ENCODE measurements at regions of chr7 and their contacts with region 1.

Region 1: DNA sequence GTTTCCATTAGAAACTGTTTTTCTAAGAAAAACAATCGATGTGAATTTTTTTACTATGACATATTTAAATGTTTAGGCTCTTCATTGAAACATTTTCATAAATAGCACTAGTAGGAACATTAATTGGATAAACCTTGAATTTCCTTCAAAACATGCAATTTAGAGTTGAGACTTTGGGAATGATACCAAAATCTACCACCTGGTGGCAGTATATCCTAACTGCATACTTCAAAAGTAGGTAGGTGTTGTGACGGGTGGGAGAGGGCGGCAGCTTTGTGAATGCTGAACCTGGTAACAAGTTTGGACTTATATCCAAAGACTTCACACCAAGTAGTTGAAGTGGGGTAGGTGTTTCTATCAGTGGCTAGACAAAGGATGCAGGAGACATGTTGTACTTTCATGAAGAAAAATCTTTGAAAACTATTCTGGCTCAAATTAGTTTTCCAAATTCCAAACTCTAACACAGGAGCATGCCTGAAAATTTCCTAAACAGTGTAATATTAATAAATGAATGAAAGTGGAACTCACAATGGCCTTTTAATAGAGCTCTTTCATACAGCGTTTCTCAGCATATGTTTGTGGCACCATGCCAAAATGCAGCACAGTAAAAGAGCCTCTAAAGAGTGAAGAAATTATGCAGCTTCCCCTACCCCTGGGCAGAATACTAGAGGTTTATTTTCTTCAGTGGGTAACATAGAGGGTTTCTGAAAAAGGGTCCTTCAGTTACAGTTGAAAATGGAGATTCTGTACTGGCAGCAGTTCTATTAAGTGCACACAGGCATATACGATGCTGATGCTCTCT is 201.0 kb upstream of the TPK1 start:
- DNase-seq: peak; percentile 46
- ATAC-seq: no peak
- H3K4me3 ChIP-seq: no peak overlapping the region
- H3K27ac ChIP-seq: no peak overlapping the region
- H3K4me1 ChIP-seq: no peaks in the 10 kb centered on the region
- H3K27me3 ChIP-seq: no peaks in the 10 kb centered on the region
- CTCF ChIP-seq: peak; percentile 81

Region 2: GRCh38 chr7:144854839-144855424 is 181.9 kb before region 1 on chr7:
- CTCF ChIA-PET with region 1: no interaction called
- POLR2A ChIA-PET with region 1: no interaction called
- in situ Hi-C with region 1: no loop called
- intact Hi-C with region 1: loop called (anchors 10 kb)
- DNase-seq: no peak
- ATAC-seq: peak; percentile 68; the same call in 1 of the 2 replicates
- H3K4me3 ChIP-seq: no peak overlapping the region
- H3K27ac ChIP-seq: no peak overlapping the region
- H3K4me1 ChIP-seq: peaks cover 5% of the 10 kb centered on the region
- H3K27me3 ChIP-seq: peaks cover 3% of the 10 kb centered on the region; the same call in 1 of the 2 replicates
- CTCF ChIP-seq: peak; percentile 74; the same call in 1 of the 2 replicates

Region 3: DNA sequence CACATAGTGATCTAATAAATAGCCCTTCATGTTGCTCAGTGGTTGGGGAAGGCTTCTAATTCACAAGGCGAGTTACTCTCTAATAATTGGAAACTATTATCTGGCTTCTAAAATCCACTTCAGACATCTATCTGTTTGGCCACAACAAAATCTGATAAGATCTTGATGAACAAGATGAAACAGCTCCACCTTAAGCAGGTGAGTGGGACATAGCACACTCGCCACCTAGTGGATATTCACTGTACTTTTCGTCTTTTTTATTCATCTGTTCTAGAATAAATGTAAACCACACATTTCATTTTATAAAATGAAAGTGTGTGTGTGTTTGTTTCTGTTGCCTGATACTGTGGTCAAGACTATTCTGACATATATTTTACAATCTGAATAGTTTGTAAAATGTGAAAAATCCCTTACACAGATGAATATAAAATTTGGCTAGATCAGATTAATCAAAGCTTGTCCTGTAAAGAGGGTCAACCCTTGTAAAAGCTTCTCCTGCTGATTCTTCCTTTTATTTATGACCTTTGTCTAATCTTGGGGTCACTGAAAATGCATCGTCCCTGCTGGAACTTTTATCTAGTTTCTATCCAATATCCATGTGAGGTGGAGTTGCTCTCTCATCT is 1053.3 kb after region 1 on chr7:
- CTCF ChIA-PET with region 1: no interaction called
- POLR2A ChIA-PET with region 1: no interaction called
- in situ Hi-C with region 1: no loop called
- intact Hi-C with region 1: loop called (anchors 10 kb)
- DNase-seq: peak; percentile 33
- ATAC-seq: peak; percentile 71; the same call in 1 of the 2 replicates
- H3K4me3 ChIP-seq: no peak overlapping the region
- H3K27ac ChIP-seq: no peak overlapping the region
- H3K4me1 ChIP-seq: no peaks in the 10 kb centered on the region
- H3K27me3 ChIP-seq: no peaks in the 10 kb centered on the region
- CTCF ChIP-seq: peak; percentile 75; the same call in 1 of the 2 replicates